ENCODE measurements at regions of chr18 and their contacts with region 1.

Region 1: DNA sequence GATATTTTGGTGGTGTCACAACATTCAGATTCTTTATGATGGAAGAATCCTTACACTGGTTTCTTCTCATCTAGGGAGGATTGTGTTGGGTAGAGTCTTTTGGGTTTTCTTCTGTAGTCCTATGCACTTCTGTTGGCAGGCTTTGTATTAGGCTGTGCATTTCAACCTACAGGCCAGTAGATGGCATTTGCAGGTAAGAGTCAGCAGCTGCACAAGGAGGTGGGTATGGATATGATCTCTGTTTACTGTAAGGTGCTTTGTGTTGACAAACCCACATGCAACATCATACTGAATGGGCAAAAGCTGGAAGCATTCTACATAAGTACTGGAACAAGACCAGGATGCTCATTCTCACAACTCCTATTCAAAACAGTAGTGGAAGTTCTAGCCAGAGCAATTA is 656.8 kb downstream of the METTL4 start:
- DNase-seq: no peak
- ATAC-seq: no peak

Region 2: DNA sequence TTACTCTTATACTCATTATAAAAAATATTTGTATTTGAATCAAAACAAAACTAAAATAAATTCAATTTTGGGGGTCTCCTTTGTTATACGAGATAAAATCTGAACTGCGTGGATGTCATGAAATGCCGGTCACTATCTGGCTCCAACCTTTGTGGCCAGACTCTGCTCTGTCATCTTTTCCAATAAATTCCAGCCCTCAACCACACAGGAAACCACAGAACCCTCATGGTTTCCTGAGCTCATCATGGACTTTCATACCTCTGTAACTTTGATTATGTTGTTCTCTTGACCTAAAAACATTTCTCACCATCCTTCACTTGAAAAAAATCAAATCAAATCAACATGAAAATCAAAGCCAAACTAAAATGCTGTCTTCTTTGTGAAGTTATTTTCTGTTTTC is 67.8 kb before region 1 on chr18:
- intact Hi-C with region 1: loop called in 1 of 2 experiments (anchors 10 kb)
- DNase-seq: no peak
- ATAC-seq: no peak